Adrenal gland (tissue), 19 donors: ENCODE measurements at regions of chr12 and their contacts with region 1.

Region 1: DNA sequence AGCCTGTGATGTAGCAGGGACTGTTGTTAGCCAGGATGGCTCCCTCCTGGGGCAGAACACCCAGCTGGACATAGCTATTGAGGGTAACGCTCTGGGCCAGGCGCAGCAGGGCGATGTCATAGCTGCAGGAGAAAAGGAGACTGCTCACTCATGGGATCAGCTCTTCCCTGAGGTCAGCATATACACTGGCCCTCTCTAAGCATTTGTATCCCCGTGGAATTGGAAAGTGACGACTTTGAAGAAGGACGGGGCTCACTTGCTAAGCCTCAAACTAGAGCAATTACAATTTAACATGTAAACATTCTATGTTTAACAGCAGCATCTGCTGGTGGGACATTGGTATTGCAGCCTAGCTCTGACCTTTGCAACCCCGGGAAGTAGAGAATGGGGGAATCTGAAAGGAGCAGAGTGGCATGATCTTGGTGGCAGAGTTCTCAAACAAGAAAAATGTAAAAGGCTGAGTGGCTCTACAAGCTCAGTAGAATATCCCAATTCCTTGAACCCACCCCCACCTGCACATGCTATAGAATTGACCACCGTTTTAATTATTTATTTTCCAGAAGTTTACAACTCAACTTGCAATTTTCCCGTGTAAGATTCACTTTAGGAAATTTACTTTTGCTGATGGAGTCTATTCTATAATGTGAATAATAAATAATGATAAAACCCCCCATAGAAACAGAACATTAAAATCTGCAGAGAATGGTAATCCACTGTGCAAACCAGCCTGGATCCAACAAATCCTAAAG is 5.0 kb downstream of the CELA1 start:
- DNase-seq: peak; percentile 62 to 89 (median 73)
- H3K4me3 ChIP-seq: peak overlapping the region in 1 of 4 donors; percentile 25
- H3K27ac ChIP-seq: no peak overlapping the region
- H3K4me1 ChIP-seq: peaks cover 0 to 10% of the 10 kb centered on the region in 2 donors
- H3K27me3 ChIP-seq: no peaks in the 10 kb centered on the region
- CTCF ChIP-seq: peak; percentile 95 to 99 (median 98)
- POLR2A ChIP-seq: no peak

Region 2: GRCh38 chr12:50842637-50843493 is 498.6 kb before region 1 on chr12 and contains the start of gene TMPRSS12:
- intact Hi-C with region 1: loop called in 1 of 2 experiments (anchors 10 kb)
- DNase-seq: peak; percentile 48 to 70 (median 64)
- H3K4me3 ChIP-seq: peak within 1 kb of the TSS in 2 of 4 donors; percentile 1 to 42
- H3K27ac ChIP-seq: peak within 1 kb of the TSS in 4 of 5 donors; percentile 14 to 67 (median 61)
- H3K4me1 ChIP-seq: no peaks in the 10 kb centered on the region
- H3K27me3 ChIP-seq: no peaks in the 10 kb centered on the region
- CTCF ChIP-seq: peak in 1 of 6 experiments; percentile 19
- POLR2A ChIP-seq: peak in 1 of 2 donors; percentile 37
- total RNA-seq, gene TMPRSS12: 0.39 TPM in 1 of 9 donors, not detected in the others

Region 3: GRCh38 chr12:51047655-51048540 is 293.5 kb before region 1 on chr12 and contains the start of gene LETMD1:
- intact Hi-C with region 1: loop called in 1 of 2 experiments (anchors 5 kb)
- DNase-seq: peak; percentile 92 to 98 (median 97)
- H3K4me3 ChIP-seq: peak within 1 kb of the TSS; percentile 50 to 93 (median 82)
- H3K27ac ChIP-seq: peak within 1 kb of the TSS; percentile 80 to 96 (median 93)
- H3K4me1 ChIP-seq: peaks cover 15 to 18% of the 10 kb centered on the region in 2 donors
- H3K27me3 ChIP-seq: no peaks in the 10 kb centered on the region
- CTCF ChIP-seq: peak; percentile 70 to 93 (median 90)
- POLR2A ChIP-seq: peak; percentile 73 to 91
- total RNA-seq, gene LETMD1: 37.7 to 122 (median 82.2) TPM

Region 4: GRCh38 chr12:51065530-51065929 is 275.9 kb before region 1 on chr12:
- intact Hi-C with region 1: loop called in 1 of 2 experiments (anchors 10 kb)
- DNase-seq: no peak
- H3K4me3 ChIP-seq: no peak overlapping the region
- H3K27ac ChIP-seq: no peak overlapping the region
- H3K4me1 ChIP-seq: no peaks in the 10 kb centered on the region
- H3K27me3 ChIP-seq: no peaks in the 10 kb centered on the region
- CTCF ChIP-seq: no peak
- POLR2A ChIP-seq: no peak

Region 5: DNA sequence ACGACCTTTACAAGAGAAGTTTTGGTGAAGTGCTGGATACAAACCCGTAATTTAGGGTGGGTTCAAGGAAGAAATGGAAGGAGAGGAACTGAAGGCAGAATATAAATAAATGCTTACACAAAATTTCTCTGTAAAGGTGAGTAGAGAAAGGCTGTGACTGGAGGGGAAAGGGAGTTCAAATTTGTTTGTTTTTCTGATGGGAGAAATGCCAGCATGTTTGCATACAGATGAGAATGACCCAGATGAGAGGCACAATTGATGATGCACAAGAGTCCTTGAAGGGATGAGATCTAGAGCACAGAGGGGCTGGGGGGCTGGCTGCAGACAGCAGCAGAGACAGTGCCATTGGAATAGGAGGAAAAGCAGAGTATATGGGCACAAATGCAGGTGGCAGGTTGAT is 84.5 kb before region 1 on chr12:
- intact Hi-C with region 1: loop called in 1 of 2 experiments (anchors 5 kb)
- DNase-seq: no peak
- H3K4me3 ChIP-seq: no peak overlapping the region
- H3K27ac ChIP-seq: no peak overlapping the region
- H3K4me1 ChIP-seq: peaks cover 0 to 5% of the 10 kb centered on the region in 2 donors
- H3K27me3 ChIP-seq: no peaks in the 10 kb centered on the region
- CTCF ChIP-seq: no peak
- POLR2A ChIP-seq: no peak

Region 6: GRCh38 chr12:51270067-51270970 is 71.1 kb before region 1 on chr12 and contains the start of gene SMAGP:
- intact Hi-C with region 1: loop called in 1 of 2 experiments (anchors 5 kb)
- DNase-seq: peak; percentile 48 to 68 (median 65)
- H3K4me3 ChIP-seq: peak within 1 kb of the TSS; percentile 50 to 97 (median 76)
- H3K27ac ChIP-seq: peak within 1 kb of the TSS in 4 of 5 donors; percentile 60 to 91 (median 79)
- H3K4me1 ChIP-seq: peaks cover 0 to 13% of the 10 kb centered on the region in 2 donors
- H3K27me3 ChIP-seq: no peaks in the 10 kb centered on the region
- CTCF ChIP-seq: no peak
- POLR2A ChIP-seq: peak in 1 of 2 donors; percentile 21
- total RNA-seq, gene SMAGP: 2.7 to 32.6 (median 14.1) TPM